Activated T-helper 1 cell treated with anti-CD3 and anti-CD28 coated beads, Interleukin-12 subunit alpha, Interleukin-12 subunit beta, Interleukin-2, Interleukin-4 antibody, amounts not matched to agents 30 ng/mL and 10 ng/mL and 1 ng/mL, durations not matched to agents 14 hours and 24 hours and 36 hours (primary cell): ENCODE measurements at regions of chr6 and their contacts with region 1.

Region 1: GRCh38 chr6:52995913-52996645 is 995 bp upstream of the GSTA4 start:
- DNase-seq: no peak
- H3K4me3 Mint-ChIP-seq: peak overlapping the region; percentile 88
- H3K27ac Mint-ChIP-seq: peak overlapping the region; percentile 99
- H3K4me1 Mint-ChIP-seq: peaks cover 47% of the 10 kb centered on the region
- H3K27me3 Mint-ChIP-seq: peaks cover 11% of the 10 kb centered on the region

Region 2: GRCh38 chr6:52664186-52664990 is 331.7 kb before region 1 on chr6:
- intact Hi-C with region 1: loop called (anchors 5 kb)
- DNase-seq: peak; percentile 68
- H3K4me3 Mint-ChIP-seq: no peak overlapping the region
- H3K27ac Mint-ChIP-seq: no peak overlapping the region
- H3K4me1 Mint-ChIP-seq: peaks cover 10% of the 10 kb centered on the region
- H3K27me3 Mint-ChIP-seq: no peaks in the 10 kb centered on the region

Region 3: DNA sequence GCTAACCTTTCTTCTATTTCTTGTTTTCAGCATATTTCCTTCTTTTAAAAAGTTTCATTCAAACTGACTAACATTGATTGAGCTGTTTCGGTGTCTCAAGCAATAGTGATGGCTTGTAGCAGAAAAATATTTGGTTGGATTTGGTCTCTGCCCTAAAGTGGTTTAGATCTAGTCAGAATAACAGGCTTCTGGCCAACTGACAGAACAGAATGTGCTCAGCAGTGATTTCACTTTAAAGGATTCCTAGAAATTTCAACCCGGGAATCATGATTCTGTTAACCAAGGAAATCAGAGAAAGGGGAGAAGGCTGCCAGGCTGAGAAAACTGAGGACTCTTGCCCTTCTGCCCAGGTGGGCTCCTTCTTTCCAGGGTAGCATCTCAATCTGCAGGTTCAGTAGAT is 175.9 kb before region 1 on chr6:
- intact Hi-C with region 1: no loop called
- DNase-seq: no peak
- H3K4me3 Mint-ChIP-seq: no peak overlapping the region
- H3K27ac Mint-ChIP-seq: no peak overlapping the region
- H3K4me1 Mint-ChIP-seq: no peaks in the 10 kb centered on the region
- H3K27me3 Mint-ChIP-seq: peaks cover 3% of the 10 kb centered on the region

Region 4: DNA sequence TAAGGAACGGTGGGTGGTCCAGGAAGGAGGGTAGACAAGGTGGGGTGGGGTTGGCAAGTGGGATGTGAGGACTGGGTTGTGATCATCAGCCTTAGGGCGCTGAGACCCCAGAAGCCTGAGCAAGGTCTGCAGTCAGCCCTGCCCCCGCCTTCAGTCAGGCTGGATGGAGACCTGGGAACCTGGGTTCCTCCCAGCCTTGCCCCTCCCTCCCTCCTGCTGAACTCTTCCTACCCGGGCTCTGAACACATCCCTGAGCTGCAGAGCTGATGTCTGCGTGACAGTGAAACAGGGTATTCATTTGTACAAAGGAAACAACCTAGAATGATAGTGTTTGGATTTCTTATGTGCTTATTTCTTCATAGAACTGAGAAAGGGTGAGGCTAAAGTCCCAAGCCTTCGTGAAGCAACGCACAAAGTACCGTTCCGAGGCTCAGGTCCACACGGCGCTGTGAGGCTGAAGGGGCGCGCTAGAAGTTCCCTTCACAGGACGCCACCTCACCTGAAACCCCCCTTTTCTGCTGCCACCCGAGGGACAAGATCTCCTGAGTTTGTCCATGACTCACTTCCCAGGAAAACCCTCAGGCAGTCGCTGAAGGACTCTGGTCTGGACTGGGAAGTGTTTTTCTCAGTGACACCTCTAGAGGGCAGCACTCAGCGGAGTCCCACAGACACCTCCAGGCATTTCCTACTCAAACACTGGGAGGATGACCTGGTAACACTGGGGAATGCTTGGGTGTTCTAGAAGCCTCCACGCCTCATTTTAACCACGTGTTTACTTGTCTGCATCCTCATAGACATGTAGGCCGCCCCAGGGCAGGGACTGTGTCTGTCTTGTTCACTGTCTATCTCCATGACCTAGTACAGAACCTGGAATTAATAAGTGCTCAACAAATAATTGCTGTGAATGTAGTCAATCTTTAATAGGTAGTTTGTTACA is 156.7 kb before region 1 on chr6:
- intact Hi-C with region 1: loop called (anchors 2 kb)
- DNase-seq: peak; percentile 2
- H3K4me3 Mint-ChIP-seq: no peak overlapping the region
- H3K27ac Mint-ChIP-seq: no peak overlapping the region
- H3K4me1 Mint-ChIP-seq: peaks cover 6% of the 10 kb centered on the region
- H3K27me3 Mint-ChIP-seq: peaks cover 19% of the 10 kb centered on the region

Region 5: GRCh38 chr6:52876056-52876782 is 119.9 kb before region 1 on chr6:
- intact Hi-C with region 1: no loop called
- DNase-seq: no peak
- H3K4me3 Mint-ChIP-seq: no peak overlapping the region
- H3K27ac Mint-ChIP-seq: no peak overlapping the region
- H3K4me1 Mint-ChIP-seq: peaks cover 14% of the 10 kb centered on the region
- H3K27me3 Mint-ChIP-seq: peaks cover 10% of the 10 kb centered on the region

Region 6: DNA sequence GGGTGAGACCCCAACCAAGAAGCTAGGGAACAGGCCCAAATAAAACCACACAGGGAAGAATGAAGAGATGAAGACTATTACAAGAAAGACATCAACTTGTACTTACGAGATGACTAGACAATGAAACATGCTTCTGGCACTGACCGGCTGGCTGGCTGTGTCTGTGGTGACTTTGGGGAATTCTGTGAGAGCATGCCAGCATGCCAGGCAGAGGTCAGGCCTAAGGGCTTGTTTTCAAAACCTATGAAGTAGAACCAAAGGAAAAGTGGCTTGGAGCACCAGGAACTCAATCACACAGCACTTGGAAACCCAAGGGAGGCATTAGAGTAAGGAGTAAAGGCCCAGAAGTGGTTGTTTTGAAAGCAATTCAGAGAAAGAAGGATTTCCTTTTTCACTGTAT is 58.2 kb before region 1 on chr6:
- intact Hi-C with region 1: no loop called
- DNase-seq: no peak
- H3K4me3 Mint-ChIP-seq: no peak overlapping the region
- H3K27ac Mint-ChIP-seq: no peak overlapping the region
- H3K4me1 Mint-ChIP-seq: no peaks in the 10 kb centered on the region
- H3K27me3 Mint-ChIP-seq: peaks cover 5% of the 10 kb centered on the region

Region 7: GRCh38 chr6:52976591-52977035 is 19.5 kb before region 1 on chr6:
- intact Hi-C with region 1: loop called (anchors 1 kb)
- DNase-seq: no peak
- H3K4me3 Mint-ChIP-seq: peak overlapping the region; percentile 34
- H3K27ac Mint-ChIP-seq: peak overlapping the region; percentile 92
- H3K4me1 Mint-ChIP-seq: peaks cover 54% of the 10 kb centered on the region
- H3K27me3 Mint-ChIP-seq: peaks cover 2% of the 10 kb centered on the region

Region 8: DNA sequence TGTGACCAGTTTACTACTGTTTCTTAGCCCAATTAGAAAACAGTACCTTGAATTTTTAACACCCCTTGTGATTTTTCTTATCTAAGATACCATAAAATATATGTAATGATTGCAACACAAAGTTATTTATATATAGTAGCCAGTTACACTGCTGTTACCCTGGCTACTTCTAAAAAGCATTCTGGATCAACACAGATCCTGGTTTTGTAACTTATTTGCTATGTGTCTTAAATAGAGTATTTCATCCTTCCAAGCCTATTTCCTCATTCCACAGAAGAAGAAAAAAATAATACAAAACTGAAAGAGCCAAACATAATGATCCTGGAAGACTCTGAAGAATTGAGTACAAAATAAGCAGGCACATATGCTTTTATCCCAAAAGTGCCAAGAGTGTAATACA is 18.0 kb after region 1 on chr6:
- intact Hi-C with region 1: no loop called
- DNase-seq: no peak
- H3K4me3 Mint-ChIP-seq: no peak overlapping the region
- H3K27ac Mint-ChIP-seq: no peak overlapping the region
- H3K4me1 Mint-ChIP-seq: no peaks in the 10 kb centered on the region
- H3K27me3 Mint-ChIP-seq: no peaks in the 10 kb centered on the region

Region 9: GRCh38 chr6:53064726-53065215 is 68.7 kb after region 1 on chr6:
- intact Hi-C with region 1: loop called (anchors 1 kb)
- DNase-seq: peak; percentile 94
- H3K4me3 Mint-ChIP-seq: peak overlapping the region; percentile 99
- H3K27ac Mint-ChIP-seq: peak overlapping the region; percentile 99
- H3K4me1 Mint-ChIP-seq: peaks cover 46% of the 10 kb centered on the region
- H3K27me3 Mint-ChIP-seq: peaks cover 2% of the 10 kb centered on the region

Region 10: DNA sequence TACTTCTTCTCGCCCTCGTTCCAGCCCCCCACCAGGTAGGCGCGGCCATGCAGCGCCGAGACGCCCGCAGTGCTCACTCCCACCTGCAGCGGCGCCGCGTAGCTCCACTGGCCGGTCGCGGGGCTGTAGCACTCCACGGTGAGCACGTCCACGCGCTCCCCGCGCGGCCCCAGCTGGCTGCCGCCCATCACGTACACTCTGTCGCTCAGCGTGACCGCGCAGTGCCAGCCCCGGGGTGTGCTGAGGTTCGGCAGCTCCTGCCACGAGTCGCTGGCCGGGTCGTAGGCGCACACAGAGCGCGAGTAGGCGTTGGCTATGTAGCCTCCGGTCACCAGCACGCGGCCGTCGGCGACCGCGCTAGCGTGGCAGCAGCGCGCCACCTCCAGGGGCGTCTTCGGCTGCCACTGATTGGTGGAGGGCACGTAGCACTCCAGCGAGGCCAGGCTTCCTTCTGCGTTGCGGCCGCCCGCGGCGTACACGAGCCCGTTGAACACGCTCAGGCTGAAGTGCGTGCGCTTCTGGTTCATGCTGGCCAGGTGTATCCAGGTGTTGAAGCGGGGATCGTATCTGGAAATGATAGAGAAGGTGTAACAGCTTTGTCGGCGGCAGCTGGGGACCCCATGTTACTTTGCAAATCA is 655.8 kb after region 1 on chr6:
- intact Hi-C with region 1: loop called (anchors 10 kb)
- DNase-seq: peak; percentile 64
- H3K4me3 Mint-ChIP-seq: peak overlapping the region; percentile 90
- H3K27ac Mint-ChIP-seq: peak overlapping the region; percentile 81
- H3K4me1 Mint-ChIP-seq: peaks cover 31% of the 10 kb centered on the region
- H3K27me3 Mint-ChIP-seq: peaks cover 30% of the 10 kb centered on the region